CD8-positive, alpha-beta T cell (primary cell): ENCODE measurements at regions of chr5 and their contacts with region 1.

Region 1: DNA sequence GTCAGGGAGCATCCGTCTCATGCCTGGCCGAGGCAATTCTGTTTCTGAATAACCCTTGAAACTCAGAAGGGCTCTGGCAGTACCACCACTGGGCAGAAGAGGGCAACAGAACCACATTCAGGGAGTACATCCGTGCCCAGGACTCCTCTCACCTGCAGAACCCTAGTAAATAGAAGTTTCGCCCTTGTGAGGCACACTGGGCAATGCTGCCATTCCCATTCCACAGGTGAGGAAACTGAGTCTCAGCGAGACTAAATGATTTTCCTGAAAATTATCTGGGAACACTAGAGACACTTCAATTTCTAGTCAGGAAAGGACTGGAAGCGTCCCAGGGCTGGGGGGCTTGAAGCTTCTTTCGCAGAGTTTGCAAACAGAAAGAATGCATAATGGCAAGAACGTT is 74.7 kb downstream of the FGF1 start:
- DNase-seq: peak; percentile 30 to 73 (median 60)
- ATAC-seq: peak; percentile 89
- H3K4me3 ChIP-seq: no peak overlapping the region
- H3K4me3 Mint-ChIP-seq: no peak overlapping the region
- H3K27ac ChIP-seq: no peak overlapping the region
- H3K27ac Mint-ChIP-seq: no peak overlapping the region
- H3K4me1 ChIP-seq: no peaks in the 10 kb centered on the region
- H3K4me1 Mint-ChIP-seq: peaks cover 3% of the 10 kb centered on the region
- H3K27me3 ChIP-seq: no peaks in the 10 kb centered on the region
- H3K27me3 Mint-ChIP-seq: peaks cover 9% of the 10 kb centered on the region
- CTCF ChIP-seq: peak; percentile 81

Region 2: GRCh38 chr5:142600611-142601358 is 10.4 kb before region 1 on chr5:
- CTCF ChIA-PET with region 1: interaction called, 11 read pairs
- POLR2A ChIA-PET with region 1: no interaction called
- intact Hi-C with region 1: no loop called
- DNase-seq: no peak
- ATAC-seq: no peak
- H3K4me3 ChIP-seq: no peak overlapping the region
- H3K4me3 Mint-ChIP-seq: no peak overlapping the region
- H3K27ac ChIP-seq: no peak overlapping the region
- H3K27ac Mint-ChIP-seq: no peak overlapping the region
- H3K4me1 ChIP-seq: no peaks in the 10 kb centered on the region
- H3K4me1 Mint-ChIP-seq: no peaks in the 10 kb centered on the region
- H3K27me3 ChIP-seq: peaks cover 0 to 2% of the 10 kb centered on the region in 2 experiments
- H3K27me3 Mint-ChIP-seq: peaks cover 11% of the 10 kb centered on the region
- CTCF ChIP-seq: no peak

Region 3: GRCh38 chr5:142627383-142628255 is 16.5 kb after region 1 on chr5:
- CTCF ChIA-PET with region 1: no interaction called
- POLR2A ChIA-PET with region 1: no interaction called
- intact Hi-C with region 1: no loop called
- DNase-seq: no peak
- ATAC-seq: no peak
- H3K4me3 ChIP-seq: no peak overlapping the region
- H3K4me3 Mint-ChIP-seq: no peak overlapping the region
- H3K27ac ChIP-seq: no peak overlapping the region
- H3K27ac Mint-ChIP-seq: no peak overlapping the region
- H3K4me1 ChIP-seq: no peaks in the 10 kb centered on the region
- H3K4me1 Mint-ChIP-seq: no peaks in the 10 kb centered on the region
- H3K27me3 ChIP-seq: no peaks in the 10 kb centered on the region
- H3K27me3 Mint-ChIP-seq: peaks cover 2% of the 10 kb centered on the region
- CTCF ChIP-seq: no peak